ENCODE measurements at regions of chr14 and their contacts with region 1.

Region 1: DNA sequence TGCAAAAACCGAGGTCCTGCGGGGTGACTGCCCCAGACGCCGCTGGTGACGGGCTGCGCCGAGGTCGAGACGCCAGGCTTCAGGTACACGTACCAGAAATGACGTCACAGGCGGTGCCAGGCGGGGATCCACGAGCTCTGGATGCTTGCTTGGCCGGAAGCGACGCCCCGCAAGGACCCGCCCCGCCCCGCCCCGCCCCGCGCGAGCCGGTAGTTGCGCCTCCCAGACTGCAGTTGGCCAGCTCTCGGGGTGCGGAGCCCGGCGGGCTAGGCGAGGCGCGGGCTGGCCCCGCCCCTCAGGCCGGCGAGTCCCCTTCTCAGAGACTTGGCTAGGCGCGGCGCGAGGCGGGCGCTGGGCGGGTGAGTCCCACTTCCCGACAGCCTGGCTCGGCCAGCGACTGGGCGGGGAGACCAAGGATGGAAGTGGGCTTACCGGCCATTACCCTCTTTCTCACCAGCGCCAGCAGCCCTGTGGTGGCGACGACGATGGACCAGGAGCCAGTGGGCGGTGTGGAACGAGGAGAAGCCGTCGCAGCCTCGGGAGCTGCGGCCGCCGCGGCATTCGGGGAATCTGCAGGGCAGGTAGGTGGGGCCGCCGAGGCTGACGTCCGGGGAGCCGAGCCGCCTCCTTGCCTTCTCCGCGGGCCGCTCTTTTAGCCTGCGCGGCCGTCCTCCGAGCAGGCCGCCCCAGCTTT is at the start of gene FAM177A1:
- DNase-seq: peak; percentile 96
- H3K4me3 Mint-ChIP-seq: peak within 1 kb of the TSS; percentile 97
- H3K27ac Mint-ChIP-seq: peak within 1 kb of the TSS; percentile 99
- H3K4me1 Mint-ChIP-seq: peaks cover 32% of the 10 kb centered on the region
- H3K27me3 Mint-ChIP-seq: no peaks in the 10 kb centered on the region
- total RNA-seq, gene FAM177A1: 43.2 and 46.3 TPM in 2 replicates

Region 2: GRCh38 chr14:34539407-34540180 is 506.6 kb before region 1 on chr14 and contains the start of gene EAPP:
- intact Hi-C with region 1: loop called (anchors 5 kb)
- DNase-seq: peak; percentile 93
- H3K4me3 Mint-ChIP-seq: peak within 1 kb of the TSS; percentile 98
- H3K27ac Mint-ChIP-seq: peak within 1 kb of the TSS; percentile 93
- H3K4me1 Mint-ChIP-seq: peaks cover 18% of the 10 kb centered on the region
- H3K27me3 Mint-ChIP-seq: no peaks in the 10 kb centered on the region
- total RNA-seq, gene EAPP: 34.4 and 35.1 TPM in 2 replicates

Region 3: DNA sequence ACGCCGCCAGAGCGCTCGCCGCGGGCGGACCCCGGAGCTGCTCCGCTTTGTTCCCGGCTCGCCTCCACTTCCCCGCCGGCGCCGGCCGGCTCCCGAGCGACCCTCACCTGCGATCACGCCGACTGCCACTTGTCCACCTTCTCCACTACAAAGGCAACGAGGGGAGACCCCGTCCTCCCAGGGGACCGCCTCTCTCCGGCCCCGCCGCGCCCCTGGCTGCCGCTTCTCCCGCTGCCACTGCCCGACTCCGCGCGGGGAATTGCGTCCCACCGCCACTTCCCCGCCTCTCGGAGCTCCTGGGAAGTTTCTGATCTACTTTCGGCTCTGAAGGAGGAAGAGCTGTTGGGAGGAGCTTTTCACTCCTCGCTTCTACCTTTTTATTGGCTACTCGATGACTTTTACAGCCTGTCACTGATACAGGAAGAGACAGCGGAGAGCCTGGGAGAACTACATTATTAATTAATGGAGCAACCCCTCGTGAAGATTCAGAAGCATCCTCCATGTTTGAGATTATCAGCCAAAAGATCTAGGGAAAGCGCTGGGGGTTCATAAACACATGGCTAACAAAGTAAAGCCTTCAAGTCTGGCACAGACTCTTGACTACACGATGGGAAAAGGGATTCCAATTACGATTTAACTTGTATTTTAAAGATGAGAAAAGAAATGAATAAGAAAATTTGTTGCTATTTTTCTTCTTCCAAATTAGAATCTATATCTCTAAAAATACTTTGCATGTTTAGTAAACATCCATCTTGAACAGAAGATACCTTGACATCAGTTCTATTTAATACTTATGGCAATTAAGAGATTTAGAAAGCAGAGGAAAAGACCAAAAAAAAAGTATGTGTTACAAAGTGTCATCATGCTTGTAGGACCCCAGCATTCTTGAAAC is 170.9 kb before region 1 on chr14 and contains the start of gene BAZ1A:
- intact Hi-C with region 1: loop called (anchors 1 kb)
- DNase-seq: peak; percentile 41
- H3K4me3 Mint-ChIP-seq: peak within 1 kb of the TSS; percentile 100
- H3K27ac Mint-ChIP-seq: peak within 1 kb of the TSS; percentile 100
- H3K4me1 Mint-ChIP-seq: peaks cover 34% of the 10 kb centered on the region
- H3K27me3 Mint-ChIP-seq: peaks cover 2% of the 10 kb centered on the region
- total RNA-seq, gene BAZ1A: 75.0 and 83.7 TPM in 2 replicates

Region 4: GRCh38 chr14:34895277-34895676 is 150.9 kb before region 1 on chr14:
- intact Hi-C with region 1: no loop called
- DNase-seq: no peak
- H3K4me3 Mint-ChIP-seq: no peak overlapping the region
- H3K27ac Mint-ChIP-seq: no peak overlapping the region
- H3K4me1 Mint-ChIP-seq: peaks cover 6% of the 10 kb centered on the region
- H3K27me3 Mint-ChIP-seq: peaks cover 4% of the 10 kb centered on the region

Region 5: GRCh38 chr14:35004839-35005238 is 41.4 kb before region 1 on chr14:
- intact Hi-C with region 1: loop called (anchors 2 kb)
- DNase-seq: no peak
- H3K4me3 Mint-ChIP-seq: no peak overlapping the region
- H3K27ac Mint-ChIP-seq: no peak overlapping the region
- H3K4me1 Mint-ChIP-seq: no peaks in the 10 kb centered on the region
- H3K27me3 Mint-ChIP-seq: no peaks in the 10 kb centered on the region

Region 6: GRCh38 chr14:35068238-35069012 is 22.2 kb after region 1 on chr14:
- intact Hi-C with region 1: no loop called
- DNase-seq: no peak
- H3K4me3 Mint-ChIP-seq: no peak overlapping the region
- H3K27ac Mint-ChIP-seq: no peak overlapping the region
- H3K4me1 Mint-ChIP-seq: no peaks in the 10 kb centered on the region
- H3K27me3 Mint-ChIP-seq: no peaks in the 10 kb centered on the region

Region 7: DNA sequence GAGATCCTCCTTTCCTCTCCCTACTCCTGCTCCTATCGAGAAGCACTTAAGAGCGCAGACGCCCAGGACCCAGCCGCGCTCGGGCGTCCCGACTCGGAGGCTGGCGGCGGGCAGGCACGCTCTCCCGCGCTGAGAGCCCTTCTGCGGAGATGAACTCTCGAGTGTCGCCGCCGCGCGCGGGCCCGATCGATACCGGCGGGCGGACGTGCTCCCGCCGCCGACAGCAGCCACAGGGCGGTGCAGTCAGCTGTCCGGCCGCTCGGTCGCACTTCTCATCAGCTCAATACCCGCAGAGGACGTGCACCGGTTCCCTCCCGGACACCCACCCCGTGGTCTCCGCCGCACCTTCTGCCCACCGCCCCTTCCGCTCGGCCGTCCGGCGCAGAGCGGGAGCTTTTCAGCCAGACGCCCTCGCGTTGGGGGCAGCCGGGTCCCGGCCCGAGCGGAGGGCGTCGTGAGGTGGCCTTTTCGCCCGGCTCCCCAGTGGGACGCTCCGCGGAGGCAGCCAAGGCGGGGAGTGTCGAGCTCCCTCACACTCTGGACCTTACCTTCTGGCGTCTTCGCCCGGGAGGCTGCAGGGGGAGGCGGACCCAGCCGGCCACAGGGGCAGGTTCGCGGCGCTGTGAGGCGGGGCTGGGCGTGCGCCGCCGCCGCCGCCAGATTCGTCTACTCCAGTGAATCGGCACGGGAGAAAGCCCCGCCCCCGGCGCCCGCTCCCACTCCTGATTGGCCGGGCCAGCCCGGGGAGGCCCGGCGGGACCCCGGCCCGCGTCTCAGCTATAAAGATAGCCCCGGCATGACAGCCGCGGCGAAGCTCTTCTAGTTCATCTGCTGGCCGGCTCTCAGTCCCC is 487.4 kb after region 1 on chr14 and contains the start of gene INSM2:
- intact Hi-C with region 1: loop called (anchors 1 kb)
- DNase-seq: peak; percentile 55
- H3K4me3 Mint-ChIP-seq: peak within 1 kb of the TSS; percentile 73
- H3K27ac Mint-ChIP-seq: no peak within 1 kb of the TSS
- H3K4me1 Mint-ChIP-seq: peaks cover 5% of the 10 kb centered on the region
- H3K27me3 Mint-ChIP-seq: peaks cover 55% of the 10 kb centered on the region
- total RNA-seq, gene INSM2: not detected in 2 replicates